K562 (cell line): ENCODE measurements at regions of chr20 and their contacts with region 1.

Region 1: DNA sequence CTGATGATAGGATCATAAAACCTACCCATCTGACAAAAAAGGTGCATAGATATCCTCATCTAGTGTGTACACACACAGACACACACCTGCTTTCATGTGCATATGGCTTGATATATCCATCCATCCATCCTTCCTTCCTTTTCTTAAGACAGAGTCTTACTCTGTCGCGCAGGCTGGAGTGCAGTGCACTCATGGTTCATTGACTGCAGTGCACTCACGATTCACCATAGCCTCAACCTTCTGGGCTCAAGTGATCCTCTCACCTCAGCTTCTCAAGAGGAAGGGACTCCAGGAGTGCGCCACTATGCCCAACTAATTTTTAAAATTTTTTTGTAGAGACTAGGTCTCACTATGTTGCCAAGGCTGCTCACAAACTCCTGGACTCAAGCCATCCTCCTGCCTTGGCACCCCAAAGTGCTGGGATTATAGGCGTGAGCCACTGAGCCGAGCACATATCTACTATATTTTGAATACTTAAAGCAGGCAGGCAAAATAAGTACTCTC is 27.1 kb downstream of the ADNP start:
- DNase-seq: peak in 1 of 4 experiments; percentile 54
- ATAC-seq: peak; percentile 78
- H3K4me3 ChIP-seq: no peak overlapping the region
- H3K27ac ChIP-seq: peak overlapping the region; percentile 83
- H3K4me1 ChIP-seq: peaks cover 4 to 39% of the 10 kb centered on the region in 2 experiments
- H3K27me3 ChIP-seq: no peaks in the 10 kb centered on the region
- CTCF ChIP-seq: no peak
- EP300 ChIP-seq: no peak
- POLR2A ChIP-seq: no peak
- RAD21 ChIP-seq: no peak

Region 2: GRCh38 chr20:50919567-50919966 is 15.4 kb after region 1 on chr20:
- CTCF ChIA-PET with region 1: no interaction called
- POLR2A ChIA-PET with region 1: interaction called, 11 read pairs
- in situ Hi-C with region 1: no loop called
- intact Hi-C with region 1: no loop called
- DNase-seq: peak in 1 of 4 experiments; percentile 55
- ATAC-seq: no peak
- H3K4me3 ChIP-seq: no peak overlapping the region
- H3K27ac ChIP-seq: no peak overlapping the region
- H3K4me1 ChIP-seq: peaks cover 0 to 36% of the 10 kb centered on the region in 2 experiments; a peak in 3 of 5 replicates
- H3K27me3 ChIP-seq: no peaks in the 10 kb centered on the region
- CTCF ChIP-seq: no peak
- EP300 ChIP-seq: no peak
- POLR2A ChIP-seq: no peak
- RAD21 ChIP-seq: no peak